ENCODE measurements at regions of chr1 and their contacts with region 1.

Region 1: DNA sequence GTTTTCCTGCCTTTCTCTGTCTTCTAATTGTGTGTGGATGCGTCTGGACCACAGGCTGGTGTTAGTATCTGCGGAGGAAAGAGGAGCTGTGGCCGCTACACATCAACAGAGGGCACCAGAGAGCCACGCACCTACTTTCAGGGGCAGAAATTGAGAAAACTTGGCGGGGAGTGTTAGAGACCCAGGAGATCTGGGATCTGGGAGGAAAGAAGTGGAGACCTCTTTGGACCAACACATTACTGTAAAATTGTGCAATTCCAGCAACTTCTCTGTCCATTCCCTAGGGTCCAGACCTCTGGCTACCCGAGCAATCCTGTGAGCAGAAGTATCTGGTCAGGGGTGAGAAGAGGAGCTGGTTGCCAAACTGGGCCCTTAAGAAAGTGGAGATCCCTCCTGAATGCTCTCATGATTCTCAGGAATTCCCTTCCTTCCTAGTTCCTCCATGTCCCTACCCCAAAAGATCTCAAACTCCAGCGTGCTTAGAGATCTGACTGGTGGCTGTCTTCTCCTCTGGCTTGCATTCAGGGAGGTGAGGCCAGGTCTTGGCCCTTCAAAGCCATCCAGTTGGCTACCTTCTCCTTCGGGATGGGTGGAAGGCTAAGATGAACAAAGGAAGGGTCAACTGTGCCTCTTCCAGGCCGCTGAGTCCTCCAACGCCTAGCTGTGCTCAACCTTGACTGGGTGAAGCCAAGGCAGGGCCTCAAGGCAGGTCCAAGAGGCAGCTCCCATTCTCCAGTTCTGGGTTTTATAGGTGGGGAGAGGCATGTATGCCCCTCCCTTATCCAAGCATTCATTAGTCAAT is 1.2 kb upstream of the KIRREL1 start:
- DNase-seq: peak; percentile 58 to 91
- H3K4me3 ChIP-seq: peak overlapping the region in 2 of 4 donors; percentile 79 to 80
- H3K27ac ChIP-seq: peak overlapping the region; percentile 28 to 93 (median 79)
- H3K4me1 ChIP-seq: peaks cover 11 to 44% (median 25%) of the 10 kb centered on the region in 4 donors
- H3K27me3 ChIP-seq: peaks cover 0 to 52% (median 22%) of the 10 kb centered on the region in 3 donors
- CTCF ChIP-seq: peak in 5 of 7 experiments; percentile 50 to 89 (median 80)
- EP300 ChIP-seq: no peak
- POLR2A ChIP-seq: no peak

Region 2: GRCh38 chr1:158035976-158036583 is 43.8 kb after region 1 on chr1:
- intact Hi-C with region 1: loop called (anchors 5 kb)
- DNase-seq: peak in 1 of 2 donors; percentile 77
- H3K4me3 ChIP-seq: no peak overlapping the region
- H3K27ac ChIP-seq: no peak overlapping the region
- H3K4me1 ChIP-seq: peaks cover 4 to 28% (median 10%) of the 10 kb centered on the region in 4 donors
- H3K27me3 ChIP-seq: no peaks in the 10 kb centered on the region
- CTCF ChIP-seq: peak in 4 of 7 experiments; percentile 41 to 61 (median 49)
- EP300 ChIP-seq: no peak
- POLR2A ChIP-seq: no peak

Region 3: GRCh38 chr1:158117854-158118704 is 125.8 kb after region 1 on chr1:
- intact Hi-C with region 1: loop called (anchors 10 kb)
- DNase-seq: peak; percentile 35 to 62
- H3K4me3 ChIP-seq: peak overlapping the region; percentile 21 to 36 (median 26)
- H3K27ac ChIP-seq: peak overlapping the region in 1 of 5 donors; percentile 18
- H3K4me1 ChIP-seq: peaks cover 8 to 22% (median 17%) of the 10 kb centered on the region in 4 donors
- H3K27me3 ChIP-seq: peaks cover 0 to 48% (median 34%) of the 10 kb centered on the region in 3 donors
- CTCF ChIP-seq: peak in 3 of 7 experiments; percentile 22 to 64 (median 30)
- EP300 ChIP-seq: no peak
- POLR2A ChIP-seq: no peak